Activated naive CD4-positive, alpha-beta T cell treated with anti-CD3 and anti-CD28 coated beads, Interleukin-2, amount 10 ng/mL, durations not matched to agents 7 days and 5 days (primary cell): ENCODE measurements at regions of chr12 and their contacts with region 1.

Region 1: DNA sequence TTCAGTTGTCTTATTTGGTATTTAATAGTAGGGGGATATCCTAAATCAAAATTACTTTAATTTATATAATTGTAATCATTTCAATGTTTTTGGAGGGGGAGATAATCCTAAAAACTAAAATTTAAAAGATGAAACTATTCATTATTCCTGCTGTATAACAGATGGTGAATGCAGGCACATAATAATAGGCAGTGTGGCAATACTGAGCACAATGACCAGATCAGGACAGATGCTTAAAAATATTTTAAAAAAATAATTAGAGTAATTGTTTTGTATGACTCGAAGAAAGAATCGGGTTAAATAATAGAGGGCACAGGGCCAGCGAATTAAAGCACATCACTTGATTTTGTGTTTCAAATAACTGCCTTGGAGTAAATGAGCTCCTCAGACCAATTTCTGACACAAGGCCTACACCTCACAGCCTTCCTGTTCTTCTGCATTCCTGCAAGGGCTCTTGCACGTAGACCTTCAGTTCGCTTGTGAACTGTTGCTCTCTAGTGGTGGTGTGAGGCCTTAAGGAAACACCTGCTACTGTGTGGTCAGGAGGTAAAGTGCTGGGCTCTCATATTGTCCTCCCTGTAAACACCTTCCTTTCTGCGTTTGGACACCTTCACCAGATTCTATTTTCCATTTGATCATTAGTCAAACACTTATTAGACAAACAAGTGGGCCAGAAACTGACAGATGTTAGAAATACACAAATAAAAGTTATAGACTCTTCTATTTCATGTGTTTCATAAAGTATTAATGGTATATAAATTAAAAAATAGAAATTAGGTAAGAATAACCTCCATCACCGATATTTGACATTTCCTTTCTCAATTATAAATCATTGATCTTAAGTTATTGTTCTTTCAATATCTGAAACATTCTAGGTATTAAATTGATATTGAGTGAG is 29.3 kb upstream of the KLRF1 start:
- DNase-seq: peak; percentile 81
- H3K4me3 Mint-ChIP-seq: peak overlapping the region; percentile 74
- H3K27ac Mint-ChIP-seq: peak overlapping the region; percentile 95
- H3K4me1 Mint-ChIP-seq: peaks cover 45% of the 10 kb centered on the region
- H3K27me3 Mint-ChIP-seq: peaks cover 4% of the 10 kb centered on the region

Region 2: DNA sequence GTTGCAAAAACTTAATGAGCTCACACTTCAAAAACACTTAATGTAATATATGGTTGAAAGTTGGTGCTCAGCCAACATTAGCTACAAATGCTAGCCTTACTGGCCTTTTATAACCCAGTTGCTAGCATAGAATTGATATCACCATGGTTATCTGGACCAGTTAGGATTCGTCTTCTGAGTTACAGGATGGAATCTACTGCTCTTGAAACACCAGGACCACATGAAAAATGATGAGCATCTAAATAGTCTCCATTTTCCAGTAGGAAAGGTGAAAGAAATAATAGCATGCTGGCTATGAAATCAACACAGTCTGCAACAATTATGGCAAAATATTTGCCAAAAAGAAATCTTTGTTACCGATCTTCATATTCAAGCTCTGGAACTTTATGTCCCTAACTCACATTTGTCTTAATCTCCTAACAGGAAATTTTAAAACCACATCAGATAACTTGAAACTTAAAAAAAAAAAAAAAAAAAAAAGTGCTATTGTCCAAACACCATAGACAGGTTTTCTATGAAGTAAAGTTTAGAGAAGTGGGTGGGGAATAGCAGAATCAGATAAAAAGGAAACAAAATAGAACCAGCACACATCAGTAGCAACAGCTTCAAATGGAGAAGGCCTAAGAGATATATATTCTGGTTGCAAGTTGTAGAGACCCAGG is 24.6 kb before region 1 on chr12:
- CTCF ChIA-PET with region 1: interaction called, 14 read pairs
- DNase-seq: no peak
- H3K4me3 Mint-ChIP-seq: peak overlapping the region; percentile 59
- H3K27ac Mint-ChIP-seq: peak overlapping the region; percentile 88
- H3K4me1 Mint-ChIP-seq: peaks cover 93% of the 10 kb centered on the region
- H3K27me3 Mint-ChIP-seq: no peaks in the 10 kb centered on the region

Region 3: GRCh38 chr12:9869307-9870161 is 71.6 kb after region 1 on chr12 and contains the start of gene CLEC2B:
- CTCF ChIA-PET with region 1: interaction called, 15 read pairs
- DNase-seq: peak; percentile 56
- H3K4me3 Mint-ChIP-seq: peak within 1 kb of the TSS; percentile 73
- H3K27ac Mint-ChIP-seq: peak within 1 kb of the TSS; percentile 99
- H3K4me1 Mint-ChIP-seq: peaks cover 22% of the 10 kb centered on the region
- H3K27me3 Mint-ChIP-seq: no peaks in the 10 kb centered on the region